Activated B cell treated with CpG ODN at 0.5 μM for 24 hours (primary cell): ENCODE measurements at regions of chr20 and their contacts with region 1.

Region 1: DNA sequence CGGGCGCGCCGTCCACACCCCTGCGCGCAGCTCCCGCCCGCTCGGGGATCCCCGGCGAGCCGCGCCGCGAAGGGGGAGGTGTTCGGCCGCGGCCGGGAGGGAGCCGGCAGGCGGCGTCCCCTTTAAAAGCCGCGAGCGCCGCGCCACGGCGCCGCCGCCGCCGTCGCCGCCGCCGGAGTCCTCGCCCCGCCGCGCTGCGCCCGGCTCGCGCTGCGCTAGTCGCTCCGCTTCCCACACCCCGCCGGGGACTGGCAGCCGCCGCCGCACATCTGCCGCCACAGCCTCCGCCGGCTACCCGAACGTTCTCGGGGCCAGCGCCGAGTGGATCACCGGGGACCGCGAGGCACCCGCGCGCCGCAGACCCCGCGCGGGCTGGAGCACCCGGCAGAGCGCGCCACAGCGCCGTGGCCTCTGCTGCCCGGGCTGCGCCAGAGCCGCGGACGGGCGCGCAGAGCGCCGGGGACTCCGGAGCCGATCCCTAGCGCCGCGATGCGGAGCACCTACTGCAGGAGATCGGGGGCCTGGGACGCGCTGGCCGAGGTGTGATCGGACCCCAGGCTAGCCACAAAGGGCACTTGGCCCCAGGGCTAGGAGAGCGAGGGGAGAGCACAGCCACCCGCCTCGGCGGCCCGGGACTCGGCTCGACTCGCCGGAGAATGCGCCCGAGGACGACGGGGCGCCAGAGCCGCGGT is at the start of gene BMP2:
- DNase-seq: no peak
- ATAC-seq: peak; percentile 21
- H3K4me3 Mint-ChIP-seq: peak within 1 kb of the TSS; percentile 44
- H3K27ac Mint-ChIP-seq: no peak within 1 kb of the TSS
- H3K4me1 Mint-ChIP-seq: peaks cover 11% of the 10 kb centered on the region
- H3K27me3 Mint-ChIP-seq: peaks cover 39% of the 10 kb centered on the region
- CTCF ChIP-seq: no peak
- total RNA-seq, gene BMP2: not detected in 2 replicates

Region 2: DNA sequence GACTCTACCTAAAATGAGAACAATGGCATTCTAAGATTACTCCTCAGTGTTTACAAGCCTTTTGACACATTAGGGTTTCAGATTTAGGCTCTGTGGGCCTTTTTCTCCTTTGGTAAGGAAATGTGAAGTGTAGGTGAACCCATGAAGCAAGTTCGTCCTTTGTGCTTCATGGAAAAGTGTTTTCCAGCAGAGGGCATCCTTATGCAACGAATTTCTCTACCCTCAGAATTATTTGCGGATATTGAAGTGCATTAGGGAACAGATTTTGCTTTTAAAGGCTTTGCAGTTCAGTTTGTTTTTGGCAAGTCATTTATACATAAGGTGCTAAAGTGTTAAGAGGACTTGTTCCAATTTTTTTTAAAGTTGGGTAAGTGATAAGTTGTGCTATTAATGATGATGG is 589.1 kb before region 1 on chr20:
- CTCF ChIA-PET with region 1: no interaction called
- POLR2A ChIA-PET with region 1: no interaction called
- intact Hi-C with region 1: no loop called
- DNase-seq: no peak
- ATAC-seq: no peak
- H3K4me3 Mint-ChIP-seq: no peak overlapping the region
- H3K27ac Mint-ChIP-seq: no peak overlapping the region
- H3K4me1 Mint-ChIP-seq: no peaks in the 10 kb centered on the region
- H3K27me3 Mint-ChIP-seq: peaks cover 8% of the 10 kb centered on the region
- CTCF ChIP-seq: no peak

Region 3: DNA sequence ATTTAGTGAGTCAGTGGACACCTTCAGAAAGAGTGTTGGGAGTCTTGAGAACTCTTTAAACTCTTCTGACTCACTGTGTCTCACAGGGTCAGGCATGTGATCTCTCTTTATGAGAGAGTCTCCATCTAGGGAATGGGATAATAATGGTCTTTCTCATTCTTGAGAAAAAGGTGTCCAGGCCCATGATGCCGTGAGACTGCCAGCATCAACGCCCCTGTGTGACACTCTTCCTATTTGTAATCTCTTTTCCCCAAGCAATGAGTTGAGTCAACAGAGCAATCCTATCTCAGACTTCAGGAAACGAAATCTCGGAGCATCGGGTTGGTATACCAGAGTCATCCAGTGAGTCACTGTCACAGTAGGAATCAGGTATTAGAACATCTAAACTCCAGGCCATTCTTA is 82.5 kb before region 1 on chr20:
- CTCF ChIA-PET with region 1: no interaction called
- POLR2A ChIA-PET with region 1: no interaction called
- intact Hi-C with region 1: no loop called
- DNase-seq: no peak
- ATAC-seq: no peak
- H3K4me3 Mint-ChIP-seq: no peak overlapping the region
- H3K27ac Mint-ChIP-seq: no peak overlapping the region
- H3K4me1 Mint-ChIP-seq: no peaks in the 10 kb centered on the region
- H3K27me3 Mint-ChIP-seq: no peaks in the 10 kb centered on the region
- CTCF ChIP-seq: no peak

Region 4: DNA sequence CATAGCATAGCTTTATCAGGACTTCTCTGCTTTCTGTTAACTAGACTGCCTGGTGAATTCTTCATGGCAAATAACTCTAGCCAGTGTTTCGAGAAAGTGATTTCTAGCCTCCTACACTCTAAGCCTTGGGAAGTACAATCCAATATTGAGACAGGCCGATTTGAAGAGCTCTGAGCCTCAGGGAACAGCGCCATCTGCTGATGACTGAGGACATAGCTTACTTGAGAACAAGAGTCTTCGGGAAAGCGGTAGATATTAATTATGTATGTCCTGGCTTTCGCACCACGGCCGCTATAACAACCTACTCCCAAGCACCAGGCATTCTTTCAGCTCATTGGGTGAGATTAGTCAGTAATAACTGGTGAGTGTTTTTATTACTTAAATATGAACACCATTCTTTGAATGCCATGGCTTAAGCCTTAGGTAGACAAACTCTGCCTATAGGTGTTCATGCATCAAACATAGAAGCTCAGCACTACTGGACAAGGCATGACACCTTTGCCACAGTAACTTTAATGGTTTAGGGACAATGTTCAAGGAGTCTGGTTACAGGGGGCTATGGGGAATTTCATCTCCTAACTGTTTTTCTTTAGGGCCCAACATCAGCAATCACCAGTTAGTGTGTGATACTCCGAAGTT is 518.4 kb after region 1 on chr20:
- CTCF ChIA-PET with region 1: interaction called, 4 read pairs
- POLR2A ChIA-PET with region 1: no interaction called
- intact Hi-C with region 1: loop called (anchors 5 kb)
- DNase-seq: no peak
- ATAC-seq: no peak
- H3K4me3 Mint-ChIP-seq: no peak overlapping the region
- H3K27ac Mint-ChIP-seq: no peak overlapping the region
- H3K4me1 Mint-ChIP-seq: no peaks in the 10 kb centered on the region
- H3K27me3 Mint-ChIP-seq: no peaks in the 10 kb centered on the region
- CTCF ChIP-seq: no peak

Region 5: GRCh38 chr20:7859356-7859802 is 1091.7 kb after region 1 on chr20:
- CTCF ChIA-PET with region 1: interaction called, 3 read pairs
- POLR2A ChIA-PET with region 1: no interaction called
- intact Hi-C with region 1: loop called (anchors 5 kb)
- DNase-seq: no peak
- ATAC-seq: no peak
- H3K4me3 Mint-ChIP-seq: no peak overlapping the region
- H3K27ac Mint-ChIP-seq: no peak overlapping the region
- H3K4me1 Mint-ChIP-seq: no peaks in the 10 kb centered on the region
- H3K27me3 Mint-ChIP-seq: peaks cover 4% of the 10 kb centered on the region
- CTCF ChIP-seq: no peak